Activated CD4-positive, alpha-beta memory T cell treated with anti-CD3 and anti-CD28 coated beads for 36 hours (primary cell): ENCODE measurements at regions of chr2 and their contacts with region 1.

Region 1: GRCh38 chr2:38076606-38077430 is 867 bp upstream of the CYP1B1 start:
- DNase-seq: peak; percentile 87
- H3K4me3 Mint-ChIP-seq: peak overlapping the region; percentile 70
- H3K27ac Mint-ChIP-seq: peak overlapping the region; percentile 76
- H3K4me1 Mint-ChIP-seq: peaks cover 17% of the 10 kb centered on the region
- H3K27me3 Mint-ChIP-seq: peaks cover 60% of the 10 kb centered on the region

Region 2: GRCh38 chr2:37925063-37925897 is 151.5 kb before region 1 on chr2 and contains the start of gene RMDN2:
- CTCF ChIA-PET with region 1: no interaction called
- POLR2A ChIA-PET with region 1: no interaction called
- intact Hi-C with region 1: loop called (anchors 10 kb)
- DNase-seq: peak; percentile 89
- H3K4me3 Mint-ChIP-seq: peak within 1 kb of the TSS; percentile 84
- H3K27ac Mint-ChIP-seq: peak within 1 kb of the TSS; percentile 66
- H3K4me1 Mint-ChIP-seq: peaks cover 8% of the 10 kb centered on the region
- H3K27me3 Mint-ChIP-seq: peaks cover 3% of the 10 kb centered on the region
- total RNA-seq, gene RMDN2: 1.8 to 2.1 TPM

Region 3: GRCh38 chr2:37982147-37982582 is 94.7 kb before region 1 on chr2:
- CTCF ChIA-PET with region 1: interaction called, 4 read pairs
- POLR2A ChIA-PET with region 1: no interaction called
- intact Hi-C with region 1: loop called (anchors 2 kb)
- DNase-seq: peak; percentile 68
- H3K4me3 Mint-ChIP-seq: no peak overlapping the region
- H3K27ac Mint-ChIP-seq: no peak overlapping the region
- H3K4me1 Mint-ChIP-seq: no peaks in the 10 kb centered on the region
- H3K27me3 Mint-ChIP-seq: peaks cover 2% of the 10 kb centered on the region

Region 4: DNA sequence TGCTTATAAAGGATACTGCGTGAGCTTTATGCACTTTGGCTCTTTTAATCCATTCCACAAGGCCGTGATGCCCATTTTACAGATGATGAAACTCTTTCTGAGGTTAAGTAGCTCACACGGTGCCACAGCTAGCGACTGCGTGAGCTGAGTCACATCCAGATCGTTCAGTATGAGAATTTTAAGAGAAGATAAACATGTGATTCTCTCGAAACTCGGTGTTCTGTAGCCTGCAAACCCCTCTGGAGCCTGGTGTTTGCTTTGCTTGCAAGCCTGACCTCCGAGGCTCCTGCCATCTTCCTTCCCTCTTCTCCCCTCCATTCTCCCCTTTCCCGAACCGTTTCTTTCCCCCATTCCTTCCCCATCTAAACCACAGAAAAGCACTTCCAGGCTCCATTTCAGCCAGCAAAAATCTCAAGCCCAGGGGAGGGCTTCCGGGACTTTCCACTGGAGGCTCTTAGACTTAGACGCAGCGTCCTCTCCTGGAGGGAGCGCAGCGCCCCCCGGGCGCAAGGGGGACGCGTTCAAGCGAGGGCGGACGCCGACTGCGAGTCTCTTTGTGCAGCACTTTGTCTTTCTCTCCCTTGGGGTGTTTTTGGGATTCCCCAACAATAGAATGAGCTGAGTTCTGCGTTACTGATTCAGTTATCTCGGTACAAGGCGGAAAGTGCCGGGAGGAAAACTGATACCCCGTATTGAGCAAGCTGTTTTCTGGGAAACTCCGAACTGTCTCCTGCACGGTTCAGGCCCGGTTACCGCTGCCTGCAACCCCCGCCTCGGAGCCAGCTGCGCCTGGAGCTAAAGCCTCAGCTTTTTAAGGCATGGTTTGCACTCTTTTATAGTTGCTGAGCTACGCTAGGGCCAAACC is 38.8 kb before region 1 on chr2:
- CTCF ChIA-PET with region 1: interaction called, 27 read pairs
- POLR2A ChIA-PET with region 1: interaction called, 23 read pairs
- intact Hi-C with region 1: loop called (anchors 2 kb)
- DNase-seq: peak; percentile 70
- H3K4me3 Mint-ChIP-seq: peak overlapping the region; percentile 59
- H3K27ac Mint-ChIP-seq: peak overlapping the region; percentile 80
- H3K4me1 Mint-ChIP-seq: peaks cover 29% of the 10 kb centered on the region
- H3K27me3 Mint-ChIP-seq: peaks cover 49% of the 10 kb centered on the region

Region 5: DNA sequence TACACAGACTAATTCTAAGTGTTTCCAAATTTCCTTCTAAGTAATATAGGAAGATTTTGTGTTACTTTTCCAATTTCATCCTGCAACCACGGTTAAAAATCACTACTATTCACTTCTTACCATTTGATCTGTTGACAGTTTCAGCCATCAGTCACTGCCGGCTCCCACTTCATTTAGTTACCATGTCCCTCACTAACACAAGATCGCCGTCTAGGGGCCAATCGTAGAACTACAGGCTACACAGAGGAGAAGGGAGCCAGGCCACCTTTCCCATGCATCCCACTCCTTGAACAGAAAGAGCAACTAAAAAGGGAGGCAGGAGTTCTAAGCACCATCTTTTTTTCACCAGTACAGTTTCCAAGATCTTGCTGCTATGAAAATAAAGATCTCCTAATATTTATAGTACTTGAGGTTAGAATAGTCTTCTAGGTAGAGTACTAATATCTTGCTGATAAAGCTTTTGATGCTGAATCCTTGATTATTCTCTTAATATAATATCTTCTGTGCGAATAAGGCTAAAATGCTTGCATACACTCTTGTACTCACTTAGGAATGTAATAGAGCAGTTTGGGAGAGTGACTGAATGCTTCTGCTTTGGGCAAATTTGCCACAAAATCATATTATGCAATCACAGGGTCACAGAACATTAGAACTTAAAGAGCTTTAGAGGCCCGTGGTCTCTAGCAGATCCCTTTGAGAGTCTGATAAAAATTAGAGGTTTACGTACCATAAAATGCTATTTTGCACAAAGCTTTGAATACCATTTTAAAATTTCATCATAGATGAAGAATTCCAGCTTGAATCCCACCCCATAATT is 38.6 kb after region 1 on chr2:
- CTCF ChIA-PET with region 1: interaction called, 11 read pairs
- POLR2A ChIA-PET with region 1: no interaction called
- intact Hi-C with region 1: loop called (anchors 2 kb)
- DNase-seq: peak; percentile 85
- H3K4me3 Mint-ChIP-seq: no peak overlapping the region
- H3K27ac Mint-ChIP-seq: no peak overlapping the region
- H3K4me1 Mint-ChIP-seq: no peaks in the 10 kb centered on the region
- H3K27me3 Mint-ChIP-seq: peaks cover 27% of the 10 kb centered on the region

Region 6: DNA sequence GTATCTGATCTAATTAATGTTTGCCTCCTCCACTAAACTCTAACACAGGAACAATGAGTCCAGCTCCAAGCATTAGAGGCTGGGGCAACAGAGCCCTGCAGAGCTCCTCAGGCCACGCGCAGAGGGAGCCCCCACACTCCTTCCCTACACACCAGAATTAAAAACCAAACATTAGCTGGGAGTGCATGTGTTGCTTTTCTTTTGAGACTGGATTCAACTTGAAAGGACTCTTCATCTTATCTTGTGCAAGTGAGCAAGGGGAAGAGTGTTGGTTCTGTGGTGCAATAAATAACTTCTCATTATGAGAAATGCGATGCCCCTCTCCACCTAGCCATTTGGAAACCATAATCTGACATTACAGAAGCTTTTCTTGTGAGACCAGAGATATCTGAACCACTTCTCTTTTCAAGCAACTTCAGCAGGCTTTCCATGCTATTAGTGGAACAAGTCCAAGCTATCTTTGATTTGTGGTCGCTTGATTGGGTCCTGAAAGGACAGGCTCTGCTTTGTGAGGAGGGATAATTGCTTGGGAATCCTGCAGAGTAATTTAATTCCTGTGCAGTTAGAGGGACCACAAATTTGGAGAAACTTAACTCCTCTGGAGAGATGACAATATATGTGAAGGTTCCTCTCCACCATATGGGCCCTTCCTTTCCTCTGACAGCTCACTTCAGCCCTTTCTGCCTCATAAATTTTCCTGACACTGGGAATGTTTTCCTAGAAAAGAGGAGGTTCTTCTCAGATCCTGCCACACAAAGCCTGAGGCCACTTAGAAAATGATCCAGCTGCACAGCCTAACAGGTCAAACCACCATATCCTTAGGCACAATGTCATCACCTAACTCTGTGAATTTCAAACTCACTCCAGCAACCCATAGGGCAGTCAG is 187.8 kb after region 1 on chr2:
- CTCF ChIA-PET with region 1: no interaction called
- POLR2A ChIA-PET with region 1: no interaction called
- intact Hi-C with region 1: loop called (anchors 1 kb)
- DNase-seq: no peak
- H3K4me3 Mint-ChIP-seq: no peak overlapping the region
- H3K27ac Mint-ChIP-seq: no peak overlapping the region
- H3K4me1 Mint-ChIP-seq: peaks cover 39% of the 10 kb centered on the region
- H3K27me3 Mint-ChIP-seq: peaks cover 7% of the 10 kb centered on the region

Region 7: GRCh38 chr2:38377050-38377828 is 300.4 kb after region 1 on chr2 and contains the start of gene ATL2:
- CTCF ChIA-PET with region 1: no interaction called
- POLR2A ChIA-PET with region 1: interaction called, 3 read pairs
- intact Hi-C with region 1: loop called (anchors 1 kb)
- DNase-seq: peak; percentile 97
- H3K4me3 Mint-ChIP-seq: peak within 1 kb of the TSS; percentile 83
- H3K27ac Mint-ChIP-seq: peak within 1 kb of the TSS; percentile 81
- H3K4me1 Mint-ChIP-seq: peaks cover 55% of the 10 kb centered on the region
- H3K27me3 Mint-ChIP-seq: no peaks in the 10 kb centered on the region
- total RNA-seq, gene ATL2: 51.3 to 53.9 TPM